Cardiac septum (tissue), 1 donor: ENCODE measurements at regions of chr4 and their contacts with region 1.

Region 1: GRCh38 chr4:242121-242848 is 63.0 kb downstream of the ZNF732 start:
- DNase-seq: peak; percentile 79

Region 2: GRCh38 chr4:161496-162284 is 80.6 kb before region 1 on chr4:
- intact Hi-C with region 1: no loop called
- DNase-seq: no peak

Region 3: GRCh38 chr4:674172-675035 is 432.1 kb after region 1 on chr4 and contains the starts of genes ATP5ME and MYL5:
- intact Hi-C with region 1: loop called (anchors 10 kb)
- DNase-seq: peak; percentile 99
- total RNA-seq, gene ATP5ME: 734 TPM
- total RNA-seq, gene MYL5: 6.5 TPM